Activated T-helper 2 cell treated with anti-CD3 and anti-CD28 coated beads, Interferon-gamma antibody, Interleukin-2, Interleukin-4, amounts not matched to agents 10 μg/mL and 5 μg/mL and 100 μg/mL, durations not matched to agents 14 hours and 24 hours and 36 hours (primary cell): ENCODE measurements at regions of chr12 and their contacts with region 1.

Region 1: GRCh38 chr12:49342066-49342913 is 4.4 kb upstream of the DNAJC22 start:
- DNase-seq: peak; percentile 67
- H3K4me3 Mint-ChIP-seq: peak overlapping the region; percentile 37
- H3K27ac Mint-ChIP-seq: no peak overlapping the region
- H3K4me1 Mint-ChIP-seq: peaks cover 26% of the 10 kb centered on the region
- H3K27me3 Mint-ChIP-seq: peaks cover 81% of the 10 kb centered on the region

Region 2: GRCh38 chr12:49288412-49288853 is 53.9 kb before region 1 on chr12:
- intact Hi-C with region 1: loop called (anchors 1 kb)
- DNase-seq: peak; percentile 62
- H3K4me3 Mint-ChIP-seq: no peak overlapping the region
- H3K27ac Mint-ChIP-seq: no peak overlapping the region
- H3K4me1 Mint-ChIP-seq: peaks cover 7% of the 10 kb centered on the region
- H3K27me3 Mint-ChIP-seq: peaks cover 37% of the 10 kb centered on the region

Region 3: GRCh38 chr12:49296034-49296835 is 46.1 kb before region 1 on chr12:
- intact Hi-C with region 1: loop called (anchors 1 kb)
- DNase-seq: peak; percentile 56
- H3K4me3 Mint-ChIP-seq: peak overlapping the region; percentile 57
- H3K27ac Mint-ChIP-seq: no peak overlapping the region
- H3K4me1 Mint-ChIP-seq: peaks cover 17% of the 10 kb centered on the region
- H3K27me3 Mint-ChIP-seq: peaks cover 52% of the 10 kb centered on the region